ENCODE measurements at regions of chr7 and their contacts with region 1.

Region 1: DNA sequence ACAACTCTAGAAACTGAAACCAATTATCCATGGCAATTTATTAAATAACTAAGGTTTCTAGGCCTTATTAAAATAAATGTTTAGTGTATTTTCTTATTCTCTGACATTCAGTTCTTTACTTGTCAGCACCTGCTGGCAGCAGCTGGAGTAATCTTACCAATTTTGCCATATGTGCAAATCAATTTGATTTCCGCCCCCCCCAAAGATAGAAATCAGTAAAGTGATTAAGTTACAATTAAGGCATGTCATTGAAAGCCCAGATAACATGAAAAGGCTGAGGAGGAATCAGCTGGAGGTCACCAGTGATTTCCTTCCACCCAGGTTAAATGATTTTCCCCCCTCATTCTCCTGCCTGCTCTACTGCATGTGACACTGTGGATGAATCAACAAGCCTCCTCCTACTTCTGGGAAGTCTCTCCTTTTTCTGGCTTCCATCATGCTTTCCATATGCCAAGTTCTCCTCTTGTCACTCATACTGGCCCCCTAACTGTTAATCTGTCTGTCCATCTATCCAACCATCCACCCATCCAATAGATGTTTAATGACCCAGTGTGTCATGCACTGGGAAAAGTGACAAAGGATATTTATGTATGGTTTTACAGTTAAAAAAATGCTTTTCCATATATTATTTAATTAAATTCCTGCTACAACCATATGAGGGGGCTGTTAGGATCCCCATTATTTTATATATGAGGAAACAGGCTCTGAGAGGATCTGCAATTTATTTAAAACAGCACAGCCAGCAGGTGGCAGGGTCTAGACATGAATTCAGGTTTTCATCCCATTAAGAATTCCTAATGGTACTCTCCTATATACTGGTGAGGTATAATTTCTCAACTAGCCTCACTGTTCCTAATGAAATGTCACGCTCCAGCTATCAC is 116.5 kb downstream of the ATXN7L1 start:
- DNase-seq: peak; percentile 53
- H3K4me3 ChIP-seq: no peak overlapping the region
- H3K27ac ChIP-seq: peak overlapping the region; percentile 20 to 44
- H3K4me1 ChIP-seq: peaks cover 16 to 20% of the 10 kb centered on the region in 2 experiments
- H3K27me3 ChIP-seq: no peaks in the 10 kb centered on the region
- CTCF ChIP-seq: peak; percentile 97
- EP300 ChIP-seq: peak in 1 of 2 experiments; percentile 53; a peak in 2 of 4 replicates
- RAD21 ChIP-seq: peak; percentile 96

Region 2: DNA sequence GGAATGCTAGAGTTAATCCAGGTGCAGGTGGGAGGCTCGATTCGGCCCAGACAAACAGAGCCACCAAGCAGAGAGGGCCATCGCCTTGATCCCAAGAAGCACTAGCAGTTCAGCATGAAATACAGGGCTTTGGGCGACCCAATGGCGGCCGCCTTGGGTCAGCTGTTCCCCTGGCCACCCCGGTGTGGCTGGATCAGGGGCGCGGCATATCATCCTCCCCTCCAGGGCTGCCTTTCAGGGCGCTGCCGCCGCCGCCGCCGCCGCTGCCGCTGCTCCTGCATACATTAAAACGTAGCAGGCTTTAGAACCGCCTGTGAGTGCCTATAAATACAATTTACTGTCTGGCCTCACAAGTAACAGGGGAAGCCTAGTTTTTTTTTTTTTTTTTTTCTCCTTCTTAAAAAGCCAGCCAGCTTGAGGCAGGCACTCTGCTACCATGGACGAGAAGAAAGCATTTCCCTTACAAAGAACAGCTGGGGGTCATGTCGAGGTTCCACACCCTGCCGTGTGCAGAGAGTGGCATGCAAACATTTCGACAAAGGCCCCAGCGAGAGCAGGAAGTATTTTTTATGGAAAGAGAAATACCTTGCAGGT is 120.9 kb before region 1 on chr7:
- CTCF ChIA-PET with region 1: interaction called, 13 read pairs
- POLR2A ChIA-PET with region 1: no interaction called
- DNase-seq: no peak
- H3K4me3 ChIP-seq: no peak overlapping the region
- H3K27ac ChIP-seq: no peak overlapping the region
- H3K4me1 ChIP-seq: peaks cover 0 to 15% of the 10 kb centered on the region in 2 experiments; a peak in 1 of 4 replicates
- H3K27me3 ChIP-seq: no peaks in the 10 kb centered on the region
- CTCF ChIP-seq: no peak
- EP300 ChIP-seq: no peak
- RAD21 ChIP-seq: no peak

Region 3: DNA sequence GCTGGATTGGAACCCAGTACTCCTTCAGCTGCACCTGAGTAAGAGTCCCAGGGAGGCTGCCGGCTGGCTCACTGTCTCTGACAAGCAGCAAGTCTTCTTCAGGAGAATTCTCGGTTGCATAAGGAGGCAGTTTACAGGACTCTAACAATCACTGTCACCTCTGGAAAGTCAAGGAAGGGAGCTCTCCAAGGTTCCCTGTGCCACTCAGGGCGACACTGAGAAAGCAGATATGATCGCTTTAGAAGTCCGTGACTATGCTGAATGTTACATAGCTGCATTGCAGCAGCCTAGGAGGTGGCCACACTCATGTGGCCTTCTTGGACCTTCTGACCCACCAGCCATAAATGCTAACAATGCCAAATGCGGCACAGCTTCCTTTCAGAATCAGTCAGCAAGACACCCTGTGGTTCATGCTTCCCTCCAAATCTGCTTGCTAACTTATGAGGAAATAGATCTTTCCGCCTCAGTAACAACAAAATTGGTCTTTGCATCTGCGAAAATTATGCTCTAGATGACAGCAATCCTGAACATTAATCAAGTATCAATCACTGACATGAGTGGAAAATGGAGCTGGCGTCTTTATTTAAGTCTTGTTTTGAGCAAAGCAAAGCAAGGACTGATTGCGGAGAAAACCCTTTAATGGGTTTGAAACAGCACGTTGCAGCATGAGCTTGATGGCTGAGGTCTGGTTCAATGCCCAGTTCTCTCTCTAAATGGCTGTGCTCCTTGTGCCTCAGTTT is 16.4 kb before region 1 on chr7:
- CTCF ChIA-PET with region 1: interaction called, 29 read pairs
- POLR2A ChIA-PET with region 1: no interaction called
- DNase-seq: no peak
- H3K4me3 ChIP-seq: no peak overlapping the region
- H3K27ac ChIP-seq: no peak overlapping the region
- H3K4me1 ChIP-seq: no peaks in the 10 kb centered on the region; a peak in 1 of 4 replicates
- H3K27me3 ChIP-seq: no peaks in the 10 kb centered on the region
- CTCF ChIP-seq: no peak
- EP300 ChIP-seq: no peak
- RAD21 ChIP-seq: no peak

Region 4: GRCh38 chr7:105782391-105783042 is 22.6 kb after region 1 on chr7:
- CTCF ChIA-PET with region 1: interaction called, 16 read pairs
- POLR2A ChIA-PET with region 1: no interaction called
- DNase-seq: no peak
- H3K4me3 ChIP-seq: no peak overlapping the region
- H3K27ac ChIP-seq: peak overlapping the region in 1 of 2 experiments; percentile 83; a peak in 2 of 4 replicates
- H3K4me1 ChIP-seq: peaks cover 17% of the 10 kb centered on the region in 2 experiments
- H3K27me3 ChIP-seq: no peaks in the 10 kb centered on the region
- CTCF ChIP-seq: no peak
- EP300 ChIP-seq: no peak
- RAD21 ChIP-seq: no peak; the same call in 1 of the 2 replicates

Region 5: DNA sequence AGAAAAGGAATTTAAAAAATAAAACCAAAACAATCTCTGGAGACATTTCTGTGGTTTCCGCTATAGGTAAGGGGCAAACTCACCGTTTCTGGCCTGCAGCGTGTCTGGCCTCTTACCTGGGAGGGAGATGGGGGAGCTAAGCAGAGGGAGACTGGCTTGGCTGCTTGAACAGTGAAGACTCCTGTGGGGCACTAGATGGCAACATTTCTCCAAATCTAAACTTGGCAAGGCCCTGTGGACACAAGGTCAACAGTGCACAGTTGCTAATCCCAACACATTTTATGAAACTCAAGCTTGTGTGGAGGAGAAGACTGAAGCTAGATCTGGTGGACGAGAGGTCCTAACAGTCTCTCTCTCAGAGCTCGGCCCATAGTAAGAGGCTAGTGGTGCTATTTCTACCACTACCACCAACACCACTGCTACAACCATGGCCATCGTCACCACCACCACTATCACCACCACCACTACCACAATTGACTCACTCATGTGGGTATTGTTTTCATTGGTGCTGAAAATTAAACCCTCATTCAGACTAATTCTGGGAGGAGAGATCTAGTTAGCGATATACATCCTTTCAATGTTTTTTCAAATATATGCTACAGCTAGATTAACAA is 174.8 kb after region 1 on chr7:
- CTCF ChIA-PET with region 1: interaction called, 20 read pairs
- POLR2A ChIA-PET with region 1: no interaction called
- DNase-seq: peak; percentile 65
- H3K4me3 ChIP-seq: no peak overlapping the region
- H3K27ac ChIP-seq: no peak overlapping the region
- H3K4me1 ChIP-seq: peaks cover 20 to 21% of the 10 kb centered on the region in 2 experiments
- H3K27me3 ChIP-seq: no peaks in the 10 kb centered on the region
- CTCF ChIP-seq: peak; percentile 58
- EP300 ChIP-seq: no peak
- RAD21 ChIP-seq: peak; percentile 93

Region 6: DNA sequence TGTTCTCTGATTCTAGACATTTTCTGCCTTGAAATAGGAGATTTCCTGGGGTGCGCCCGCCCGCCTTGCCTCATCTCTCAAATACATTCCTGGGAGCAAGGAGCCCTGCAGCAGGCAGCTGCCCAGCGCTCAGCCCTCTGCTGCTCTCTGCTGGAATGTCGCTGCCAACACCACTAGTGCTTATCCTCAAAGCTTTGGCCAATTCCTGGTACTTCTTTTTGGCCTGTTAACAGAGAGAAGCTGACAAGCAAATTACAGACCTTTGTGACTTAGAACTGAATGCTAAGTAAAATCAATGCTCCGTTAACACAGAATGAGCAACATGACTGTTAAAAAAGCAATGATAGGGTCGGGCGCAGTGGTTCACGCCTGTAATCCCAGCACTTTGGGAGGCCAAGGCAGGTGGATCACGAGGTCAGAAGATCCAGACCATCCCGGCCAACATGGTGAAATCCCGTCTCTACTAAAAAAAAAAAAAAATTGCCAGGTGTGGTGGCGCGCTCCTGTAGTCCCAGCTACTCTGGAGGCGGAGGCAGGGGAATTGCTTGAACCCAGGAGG is 394.1 kb after region 1 on chr7:
- CTCF ChIA-PET with region 1: interaction called, 31 read pairs
- POLR2A ChIA-PET with region 1: no interaction called
- DNase-seq: peak; percentile 86
- H3K4me3 ChIP-seq: no peak overlapping the region; a peak in 1 of 4 replicates
- H3K27ac ChIP-seq: no peak overlapping the region
- H3K4me1 ChIP-seq: peaks cover 10 to 19% of the 10 kb centered on the region in 2 experiments; a peak in 2 of 4 replicates
- H3K27me3 ChIP-seq: no peaks in the 10 kb centered on the region; the same call in 1 of the 2 replicates
- CTCF ChIP-seq: peak; percentile 100
- EP300 ChIP-seq: no peak
- RAD21 ChIP-seq: peak; percentile 100

Measured in SK-N-SH (cell line).